ENCODE measurements at regions of chr2 and their contacts with region 1.

Region 1: GRCh38 chr2:28894470-28895177 is at the start of gene WDR43:
- DNase-seq: peak; percentile 99
- H3K4me3 ChIP-seq: peak within 1 kb of the TSS; percentile 88 to 100
- H3K27ac ChIP-seq: peak within 1 kb of the TSS; percentile 63 to 88
- H3K4me1 ChIP-seq: peaks cover 20 to 32% of the 10 kb centered on the region in 2 experiments; a peak in 3 of 4 replicates
- H3K27me3 ChIP-seq: no peaks in the 10 kb centered on the region
- CTCF ChIP-seq: no peak
- EP300 ChIP-seq: peak in 1 of 2 experiments; percentile 67; a peak in 2 of 4 replicates
- RAD21 ChIP-seq: no peak; the same call in 1 of the 2 replicates
- polyA plus RNA-seq, gene WDR43: 35.1 and 48.5 TPM in 2 replicates

Region 2: GRCh38 chr2:28601616-28602015 is 293.0 kb before region 1 on chr2:
- CTCF ChIA-PET with region 1: no interaction called
- POLR2A ChIA-PET with region 1: no interaction called
- DNase-seq: no peak
- H3K4me3 ChIP-seq: no peak overlapping the region
- H3K27ac ChIP-seq: no peak overlapping the region
- H3K4me1 ChIP-seq: no peaks in the 10 kb centered on the region
- H3K27me3 ChIP-seq: no peaks in the 10 kb centered on the region
- CTCF ChIP-seq: no peak
- EP300 ChIP-seq: no peak
- RAD21 ChIP-seq: no peak

Region 3: GRCh38 chr2:28835781-28836180 is 58.8 kb before region 1 on chr2:
- CTCF ChIA-PET with region 1: no interaction called
- POLR2A ChIA-PET with region 1: no interaction called
- DNase-seq: no peak
- H3K4me3 ChIP-seq: no peak overlapping the region
- H3K27ac ChIP-seq: no peak overlapping the region
- H3K4me1 ChIP-seq: no peaks in the 10 kb centered on the region
- H3K27me3 ChIP-seq: no peaks in the 10 kb centered on the region
- CTCF ChIP-seq: no peak
- EP300 ChIP-seq: no peak
- RAD21 ChIP-seq: no peak

Region 4: DNA sequence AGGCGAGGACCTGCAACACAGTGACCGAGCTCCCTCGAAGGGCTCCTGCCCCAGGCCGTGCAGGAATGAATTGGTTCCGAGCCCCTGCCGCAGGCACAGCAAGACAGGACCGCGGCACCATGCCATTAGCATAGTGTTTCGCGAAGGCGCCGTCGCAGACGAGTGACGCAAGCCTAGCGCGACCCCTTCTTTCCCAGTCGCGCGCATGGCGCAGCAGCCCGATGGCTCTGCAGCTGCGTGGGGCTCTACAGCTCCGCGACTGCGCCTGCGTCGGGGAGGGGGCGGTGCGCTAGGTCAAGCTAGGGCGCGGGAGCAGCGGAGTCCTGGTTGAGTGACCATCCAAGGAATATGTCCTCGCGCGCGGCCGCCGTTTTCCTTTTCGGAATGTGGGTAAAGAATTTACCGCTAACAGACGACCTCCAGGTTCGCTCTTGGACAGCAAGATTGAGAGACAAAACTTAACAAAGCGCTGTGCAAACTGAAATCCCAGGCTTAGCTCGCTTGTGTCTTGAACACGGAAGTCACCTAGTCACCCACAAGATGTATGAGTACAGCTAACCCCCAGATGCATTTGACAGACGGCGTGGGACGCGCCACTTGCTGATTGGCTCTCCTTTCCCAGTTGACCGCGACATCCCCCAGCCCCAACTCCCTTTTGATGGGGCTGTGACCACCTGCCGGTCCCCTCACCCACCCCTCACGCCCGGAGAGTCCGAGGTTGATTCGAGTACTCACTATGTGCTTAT is 24.3 kb before region 1 on chr2 and contains the start of gene TRMT61B:
- CTCF ChIA-PET with region 1: interaction called, 5 read pairs
- POLR2A ChIA-PET with region 1: interaction called, 13 read pairs
- DNase-seq: peak; percentile 99
- H3K4me3 ChIP-seq: peak within 1 kb of the TSS; percentile 80 to 90
- H3K27ac ChIP-seq: peak within 1 kb of the TSS; percentile 60 to 71
- H3K4me1 ChIP-seq: peaks cover 10 to 17% of the 10 kb centered on the region in 2 experiments; a peak in 3 of 4 replicates
- H3K27me3 ChIP-seq: peaks cover 3% of the 10 kb centered on the region; the same call in 1 of the 2 replicates
- CTCF ChIP-seq: no peak
- EP300 ChIP-seq: peak in 1 of 2 experiments; percentile 20; a peak in 1 of 4 replicates
- RAD21 ChIP-seq: no peak
- polyA plus RNA-seq, gene TRMT61B: 11.0 and 11.4 TPM in 2 replicates

Measured in SK-N-SH (cell line).